Naive thymus-derived CD4-positive, alpha-beta T cell (primary cell): ENCODE measurements at regions of chr1 and their contacts with region 1.

Region 1: DNA sequence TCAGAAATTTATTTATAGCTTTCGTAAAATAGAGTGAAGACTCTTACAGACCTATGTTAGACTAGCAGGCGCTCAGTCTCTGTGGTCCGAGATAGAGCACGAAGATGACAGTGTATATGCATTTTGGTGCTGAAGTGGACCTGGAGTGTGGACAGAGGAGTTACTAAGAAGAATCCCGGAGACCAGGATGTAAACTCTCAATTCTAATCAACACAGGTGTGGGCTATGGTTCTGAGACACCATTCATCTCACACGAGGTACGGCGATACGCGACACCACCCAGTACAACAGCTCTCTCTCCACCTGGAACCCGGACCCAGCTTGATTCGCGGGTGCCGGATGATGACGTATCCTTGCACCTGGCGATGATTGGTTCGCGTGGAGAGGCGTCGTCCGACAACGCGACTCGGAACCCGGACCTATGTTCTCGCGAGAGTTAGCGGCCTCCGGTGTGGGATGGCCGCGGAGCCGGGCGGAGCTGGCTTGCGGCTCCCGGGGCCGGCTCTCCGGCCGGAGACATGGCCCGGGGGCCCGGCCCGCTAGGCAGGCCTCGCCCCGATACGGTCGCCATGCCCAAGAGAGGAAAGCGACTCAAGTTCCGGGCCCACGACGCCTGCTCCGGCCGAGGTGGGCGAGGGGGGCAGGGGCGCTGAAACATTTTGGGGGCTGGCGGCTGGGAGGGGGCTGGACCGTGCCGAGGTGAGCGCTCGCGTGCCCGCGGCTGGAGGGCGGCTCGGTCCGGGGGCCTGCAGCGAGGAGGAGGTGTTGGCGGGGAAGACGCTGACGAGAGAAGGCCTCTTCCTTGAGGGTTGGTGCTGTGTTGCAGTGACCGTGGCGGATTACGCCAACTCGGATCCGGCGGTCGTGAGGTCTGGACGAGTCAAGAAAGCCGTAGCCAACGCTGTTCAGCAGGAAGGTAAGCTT is at the start of gene TMEM183A:
- DNase-seq: peak; percentile 77 to 95 (median 92)
- ATAC-seq: peak; percentile 96
- H3K4me3 ChIP-seq: peak within 1 kb of the TSS; percentile 91
- H3K4me3 Mint-ChIP-seq: peak within 1 kb of the TSS; percentile 91 to 100 (median 96)
- H3K27ac ChIP-seq: peak within 1 kb of the TSS; percentile 90
- H3K27ac Mint-ChIP-seq: peak within 1 kb of the TSS; percentile 93 to 99 (median 98)
- H3K4me1 ChIP-seq: peaks cover 10 to 14% of the 10 kb centered on the region in 2 donors
- H3K4me1 Mint-ChIP-seq: peaks cover 24 to 46% (median 36%) of the 10 kb centered on the region in 7 donors
- H3K27me3 ChIP-seq: no peaks in the 10 kb centered on the region
- H3K27me3 Mint-ChIP-seq: peaks cover 0 to 4% (median 0%) of the 10 kb centered on the region in 5 donors
- total RNA-seq, gene TMEM183A: 61.4 to 134 (median 77.0) TPM

Region 2: GRCh38 chr1:202926720-202927491 is 80.3 kb before region 1 on chr1 and contains the start of gene KLHL12:
- CTCF ChIA-PET with region 1: interaction called, 7 read pairs
- POLR2A ChIA-PET with region 1: interaction called, 21 read pairs
- intact Hi-C with region 1: loop called (anchors 1 kb)
- DNase-seq: peak; percentile 88 to 95 (median 94)
- ATAC-seq: peak; percentile 97
- H3K4me3 ChIP-seq: peak within 1 kb of the TSS; percentile 97
- H3K4me3 Mint-ChIP-seq: peak within 1 kb of the TSS; percentile 90 to 96 (median 94)
- H3K27ac ChIP-seq: peak within 1 kb of the TSS; percentile 97
- H3K27ac Mint-ChIP-seq: peak within 1 kb of the TSS; percentile 92 to 97 (median 94)
- H3K4me1 ChIP-seq: peaks cover 19 to 26% of the 10 kb centered on the region in 2 donors
- H3K4me1 Mint-ChIP-seq: peaks cover 17 to 40% (median 34%) of the 10 kb centered on the region in 7 donors
- H3K27me3 ChIP-seq: no peaks in the 10 kb centered on the region
- H3K27me3 Mint-ChIP-seq: peaks cover 0 to 11% (median 0%) of the 10 kb centered on the region in 5 donors
- total RNA-seq, gene KLHL12: 15.6 to 28.0 (median 24.5) TPM

Region 3: DNA sequence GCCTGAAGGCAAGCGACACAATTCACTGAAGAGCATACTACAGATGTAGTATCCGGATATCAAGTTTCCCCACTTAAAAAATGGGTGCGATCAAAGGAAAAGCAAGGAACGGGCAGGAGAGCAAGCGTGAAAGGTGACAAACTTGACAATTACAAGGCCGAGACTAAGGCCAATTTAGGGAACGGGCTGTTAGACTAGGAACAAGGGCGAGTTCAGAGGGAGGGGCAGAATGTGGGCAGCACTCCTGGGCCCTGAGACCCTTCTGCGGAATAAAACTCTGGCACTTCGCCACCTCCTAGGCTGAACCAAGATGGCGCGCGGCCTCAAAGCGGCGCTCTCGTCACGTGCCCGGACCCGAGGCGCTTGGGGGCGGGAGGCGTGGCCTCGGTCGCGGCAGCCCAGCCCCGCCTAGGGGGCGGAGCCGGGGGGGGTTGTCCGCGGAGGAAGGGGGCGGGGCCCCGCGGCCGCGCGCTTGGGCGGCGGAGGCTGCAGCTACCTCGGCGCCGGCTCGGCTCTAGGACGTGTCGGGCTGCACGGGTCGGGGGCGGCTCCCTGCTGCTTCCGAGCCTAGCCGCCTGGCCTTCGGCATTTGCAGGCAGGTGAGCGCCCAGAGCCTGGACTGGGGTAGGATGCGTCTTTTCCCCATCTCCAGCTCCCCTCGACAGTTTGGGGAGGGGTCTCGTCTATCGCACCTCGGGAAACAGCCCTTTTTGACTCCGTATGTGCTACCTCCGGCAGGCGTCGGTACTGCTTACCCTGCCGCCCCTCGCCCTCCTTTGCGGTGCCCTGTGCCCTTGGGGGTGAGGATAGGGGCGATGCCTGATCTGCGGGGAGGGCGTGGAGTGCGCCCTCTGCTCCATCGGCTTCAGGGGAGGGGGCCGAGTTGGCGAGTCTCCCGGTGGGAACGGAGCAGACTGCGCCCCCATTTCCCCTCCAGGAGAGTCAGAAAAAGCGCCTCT is 19.1 kb after region 1 on chr1 and contains the start of gene PPFIA4:
- CTCF ChIA-PET with region 1: interaction called, 3 read pairs
- POLR2A ChIA-PET with region 1: interaction called, 23 read pairs
- intact Hi-C with region 1: loop called (anchors 1 kb)
- DNase-seq: peak; percentile 72 to 94 (median 89)
- ATAC-seq: peak; percentile 98
- H3K4me3 ChIP-seq: peak within 1 kb of the TSS; percentile 84
- H3K4me3 Mint-ChIP-seq: peak within 1 kb of the TSS; percentile 74 to 95 (median 84)
- H3K27ac ChIP-seq: peak within 1 kb of the TSS; percentile 53
- H3K27ac Mint-ChIP-seq: peak within 1 kb of the TSS; percentile 73 to 96 (median 85)
- H3K4me1 ChIP-seq: peaks cover 0 to 11% of the 10 kb centered on the region in 2 donors
- H3K4me1 Mint-ChIP-seq: peaks cover 0 to 24% (median 14%) of the 10 kb centered on the region in 7 donors
- H3K27me3 ChIP-seq: no peaks in the 10 kb centered on the region
- H3K27me3 Mint-ChIP-seq: peaks cover 0 to 9% (median 0%) of the 10 kb centered on the region in 5 donors
- total RNA-seq, gene PPFIA4: 0.40 to 45.5 (median 2.4) TPM

Region 4: GRCh38 chr1:203326830-203327683 is 319.8 kb after region 1 on chr1:
- CTCF ChIA-PET with region 1: no interaction called
- POLR2A ChIA-PET with region 1: no interaction called
- intact Hi-C with region 1: no loop called
- DNase-seq: peak; percentile 90 to 96 (median 94)
- ATAC-seq: peak; percentile 84
- H3K4me3 ChIP-seq: peak overlapping the region; percentile 72
- H3K4me3 Mint-ChIP-seq: peak overlapping the region; percentile 80 to 89 (median 86)
- H3K27ac ChIP-seq: peak overlapping the region; percentile 98
- H3K27ac Mint-ChIP-seq: peak overlapping the region; percentile 90 to 100 (median 99)
- H3K4me1 ChIP-seq: peaks cover 55 to 56% of the 10 kb centered on the region in 2 donors
- H3K4me1 Mint-ChIP-seq: peaks cover 40 to 73% (median 70%) of the 10 kb centered on the region in 7 donors
- H3K27me3 ChIP-seq: no peaks in the 10 kb centered on the region
- H3K27me3 Mint-ChIP-seq: no peaks in the 10 kb centered on the region